Motor neuron (in vitro differentiated cells): ENCODE measurements at regions of chr2 and their contacts with region 1.

Region 1: DNA sequence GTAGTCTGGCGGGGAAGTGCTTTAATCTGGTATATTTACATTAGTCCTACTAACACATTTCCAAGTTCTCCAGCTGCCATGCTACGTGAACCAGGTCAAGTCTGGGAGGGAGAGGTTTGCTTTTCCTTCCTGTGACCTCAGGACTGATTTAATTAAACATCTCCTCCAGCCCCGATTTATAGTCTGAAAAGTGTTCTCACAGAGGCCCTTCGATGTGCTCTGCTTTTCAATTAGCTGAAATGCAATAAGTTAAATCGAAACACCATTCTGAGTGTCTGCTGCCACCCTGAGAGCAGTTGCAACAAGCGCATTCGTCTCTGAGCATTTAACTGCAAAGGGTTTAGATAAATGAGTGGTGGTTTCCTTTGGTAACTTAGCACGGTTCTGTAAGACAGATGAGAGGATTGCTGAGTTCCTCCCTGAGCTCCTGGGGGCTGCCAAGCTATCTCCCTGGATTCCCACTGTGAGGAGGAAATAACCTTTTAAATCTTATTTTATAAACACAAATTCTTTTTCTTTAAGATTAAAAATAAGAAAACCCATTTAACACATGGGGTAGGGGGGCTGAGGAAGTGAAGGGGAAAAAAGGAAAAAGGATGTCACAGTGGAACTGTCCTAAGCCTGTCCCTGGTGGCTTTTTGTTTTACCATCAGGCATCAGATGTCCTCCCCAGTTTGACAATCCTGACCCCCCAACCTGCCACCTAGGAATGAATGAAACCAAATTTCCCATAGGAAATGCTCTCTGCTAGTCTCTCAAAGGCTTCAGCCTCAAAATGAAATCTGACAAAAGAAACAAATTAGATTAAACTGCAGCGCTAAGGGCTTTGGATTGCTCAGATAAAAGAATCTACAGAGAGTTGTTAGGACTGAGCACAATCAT is 56.5 kb upstream of the CREB1 start:
- ATAC-seq: peak; percentile 71 to 95 (median 90)
- H3K4me3 ChIP-seq: no peak overlapping the region
- H3K27ac ChIP-seq: peak overlapping the region; percentile 31 to 36
- H3K4me1 ChIP-seq: peaks cover 31 to 48% of the 10 kb centered on the region in 2 donors

Region 2: GRCh38 chr2:206693399-206694137 is 779.7 kb before region 1 on chr2:
- in situ Hi-C with region 1: loop called in 2 of 9 experiments (anchors 25 kb)
- ATAC-seq: peak in 7 of 8 experiments; percentile 42 to 85 (median 62)
- H3K4me3 ChIP-seq: no peak overlapping the region
- H3K27ac ChIP-seq: no peak overlapping the region
- H3K4me1 ChIP-seq: no peaks in the 10 kb centered on the region

Region 3: GRCh38 chr2:206800506-206801417 is 672.5 kb before region 1 on chr2:
- in situ Hi-C with region 1: loop called in 8 of 9 experiments (anchors 5 to 25 kb)
- ATAC-seq: peak; percentile 75 to 95 (median 90)
- H3K4me3 ChIP-seq: no peak overlapping the region
- H3K27ac ChIP-seq: no peak overlapping the region
- H3K4me1 ChIP-seq: peaks cover 6 to 15% of the 10 kb centered on the region in 2 donors

Region 4: GRCh38 chr2:206981739-206982340 is 491.4 kb before region 1 on chr2:
- in situ Hi-C with region 1: loop called (anchors 5 to 25 kb)
- ATAC-seq: peak; percentile 94 to 100 (median 96)
- H3K4me3 ChIP-seq: no peak overlapping the region
- H3K27ac ChIP-seq: no peak overlapping the region
- H3K4me1 ChIP-seq: peaks cover 26 to 28% of the 10 kb centered on the region in 2 donors

Region 5: DNA sequence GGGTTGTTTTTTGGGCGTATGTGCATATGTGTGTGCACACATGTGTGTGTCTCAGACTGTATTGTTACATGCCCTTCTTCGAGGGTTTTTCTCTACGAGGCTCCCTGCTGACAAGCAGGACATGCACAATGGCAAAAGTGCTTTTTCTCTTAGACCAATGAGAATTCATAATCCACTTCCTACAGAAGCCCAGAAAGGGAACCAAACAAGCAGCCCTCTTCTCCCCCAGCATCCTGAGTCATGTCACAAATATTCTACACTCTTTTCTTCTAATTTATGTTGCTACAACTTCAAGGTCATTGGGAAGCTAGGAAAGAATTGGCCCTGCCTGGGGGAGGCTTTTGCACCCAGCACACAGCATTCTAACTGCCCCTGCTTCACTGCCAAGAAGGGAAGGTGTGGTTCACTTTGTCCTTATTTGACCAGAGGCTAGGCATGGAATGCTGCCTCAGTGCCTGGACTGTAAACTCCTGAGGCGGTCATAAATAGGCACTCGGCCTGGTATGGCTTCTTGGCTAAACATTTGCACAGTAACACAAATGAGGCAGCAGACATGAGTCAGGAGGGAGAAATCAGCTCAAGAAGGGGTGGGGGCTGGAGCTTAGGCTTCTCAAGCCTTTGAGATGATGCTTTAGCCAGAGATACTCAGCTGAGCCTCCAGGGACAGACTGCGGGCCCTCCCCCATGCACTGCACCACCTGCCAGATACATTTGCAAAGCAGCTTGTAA is 214.9 kb before region 1 on chr2:
- in situ Hi-C with region 1: loop called in 1 of 9 experiments (anchors 25 kb)
- ATAC-seq: peak; percentile 52 to 80 (median 64)
- H3K4me3 ChIP-seq: no peak overlapping the region
- H3K27ac ChIP-seq: peak overlapping the region in 1 of 2 donors; percentile 20
- H3K4me1 ChIP-seq: peaks cover 53 to 57% of the 10 kb centered on the region in 2 donors

Region 6: GRCh38 chr2:207767461-207768167 is 294.3 kb after region 1 on chr2:
- in situ Hi-C with region 1: no loop called
- ATAC-seq: no peak
- H3K4me3 ChIP-seq: peak overlapping the region; percentile 55 to 73 (median 63)
- H3K27ac ChIP-seq: no peak overlapping the region
- H3K4me1 ChIP-seq: peaks cover 2 to 22% of the 10 kb centered on the region in 2 donors